Ascending aorta (tissue), 2 donors: ENCODE measurements at regions of chr18 and their contacts with region 1.

Region 1: GRCh38 chr18:22169007-22169864 is at the start of gene GATA6:
- DNase-seq: peak; percentile 88 to 97
- H3K4me3 ChIP-seq: peak within 1 kb of the TSS; percentile 89 to 90
- H3K27ac ChIP-seq: peak within 1 kb of the TSS; percentile 98 to 99
- H3K4me1 ChIP-seq: peaks cover 0 to 5% of the 10 kb centered on the region in 2 donors
- H3K27me3 ChIP-seq: no peaks in the 10 kb centered on the region
- CTCF ChIP-seq: peak; percentile 31 to 59 (median 44)
- total RNA-seq, gene GATA6: 89.3 TPM

Region 2: GRCh38 chr18:21111341-21112139 is 1057.7 kb before region 1 on chr18 and contains the start of gene ROCK1:
- intact Hi-C with region 1: loop called (anchors 10 kb)
- DNase-seq: peak; percentile 96 to 99
- H3K4me3 ChIP-seq: peak within 1 kb of the TSS; percentile 95 to 99
- H3K27ac ChIP-seq: peak within 1 kb of the TSS; percentile 98 to 99
- H3K4me1 ChIP-seq: peaks cover 16% of the 10 kb centered on the region in 2 donors
- H3K27me3 ChIP-seq: no peaks in the 10 kb centered on the region
- CTCF ChIP-seq: no peak
- total RNA-seq, gene ROCK1: 32.0 TPM

Region 3: GRCh38 chr18:21831413-21831831 is 337.8 kb before region 1 on chr18:
- intact Hi-C with region 1: loop called (anchors 5 kb)
- DNase-seq: peak; percentile 26 to 85
- H3K4me3 ChIP-seq: peak overlapping the region; percentile 18 to 55
- H3K27ac ChIP-seq: peak overlapping the region; percentile 67 to 77
- H3K4me1 ChIP-seq: peaks cover 0 to 20% of the 10 kb centered on the region in 2 donors
- H3K27me3 ChIP-seq: no peaks in the 10 kb centered on the region
- CTCF ChIP-seq: no peak

Region 4: DNA sequence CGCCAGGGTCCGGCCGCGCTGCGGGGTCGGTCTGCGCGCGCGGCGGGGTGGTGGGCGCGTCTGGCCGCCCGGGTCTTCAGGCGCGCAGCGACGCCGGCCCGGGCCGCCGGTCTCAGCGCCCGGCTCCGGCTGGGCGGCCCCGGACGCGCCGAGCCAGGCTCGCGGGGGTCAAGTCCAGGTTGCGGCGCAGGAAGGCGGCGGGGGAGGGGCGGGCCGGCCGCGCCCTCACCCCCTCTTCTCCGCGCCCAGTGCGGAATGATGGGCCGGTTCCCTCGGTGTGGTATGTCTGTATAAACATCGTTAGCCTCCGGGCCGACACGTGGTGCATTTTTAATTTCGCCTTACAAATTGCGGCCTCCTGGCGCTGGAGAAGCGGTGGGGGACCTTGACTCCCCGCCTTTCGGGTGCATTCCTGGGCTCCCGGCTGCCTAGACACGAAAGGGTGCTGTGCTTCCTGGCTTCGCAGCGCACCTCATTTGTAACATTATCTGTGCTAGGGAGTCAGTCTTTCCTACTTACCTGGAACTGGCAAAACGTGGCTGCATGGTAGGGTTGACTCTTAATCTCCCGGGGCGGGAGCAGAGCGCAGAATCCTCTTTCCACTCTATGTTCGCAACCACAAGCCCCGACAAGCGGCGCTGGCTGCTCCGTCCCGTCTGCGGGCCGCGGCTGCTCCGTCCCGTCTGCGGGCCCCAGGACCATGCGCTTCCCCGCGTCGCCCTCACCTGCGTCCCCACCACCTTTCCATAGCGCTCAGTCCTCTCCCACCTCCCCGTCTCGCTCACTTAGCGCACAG is 179.5 kb after region 1 on chr18:
- intact Hi-C with region 1: loop called (anchors 5 kb)
- DNase-seq: peak in 1 of 2 donors; percentile 83
- H3K4me3 ChIP-seq: peak overlapping the region; percentile 54 to 66
- H3K27ac ChIP-seq: peak overlapping the region; percentile 93 to 97
- H3K4me1 ChIP-seq: peaks cover 7 to 21% of the 10 kb centered on the region in 2 donors
- H3K27me3 ChIP-seq: no peaks in the 10 kb centered on the region
- CTCF ChIP-seq: no peak

Region 5: DNA sequence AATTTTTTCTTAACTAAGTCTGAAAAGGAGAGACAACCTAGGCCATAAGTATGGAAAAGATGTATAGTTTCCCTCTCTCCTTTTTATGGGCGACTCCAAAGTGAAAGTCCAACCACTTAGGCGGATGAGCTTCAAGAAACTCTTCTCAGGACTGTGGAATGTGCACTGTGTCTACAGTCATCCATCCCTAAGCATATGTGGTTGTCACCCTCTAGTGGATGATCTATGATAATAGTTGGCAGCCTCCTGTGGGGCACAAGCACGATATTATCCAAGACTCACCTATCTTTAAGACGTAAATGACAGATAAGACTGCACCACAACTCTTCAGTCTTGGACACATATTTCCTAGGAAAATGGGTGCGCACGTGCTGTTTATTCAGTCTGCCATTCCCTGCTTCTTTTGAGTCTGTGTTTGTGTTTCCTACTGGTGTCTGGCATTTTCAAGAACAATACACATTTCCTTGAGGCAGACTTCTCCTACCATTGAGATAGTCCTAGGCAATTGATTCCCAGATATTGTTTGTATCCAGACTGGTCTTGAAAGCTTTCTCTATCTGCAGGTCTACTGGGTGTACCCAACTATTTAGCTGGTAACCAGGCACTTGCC is 394.0 kb after region 1 on chr18:
- intact Hi-C with region 1: loop called (anchors 1 kb)
- DNase-seq: peak in 1 of 2 donors; percentile 74
- H3K4me3 ChIP-seq: peak overlapping the region; percentile 21 to 57
- H3K27ac ChIP-seq: peak overlapping the region; percentile 92 to 99
- H3K4me1 ChIP-seq: peaks cover 0 to 16% of the 10 kb centered on the region in 2 donors
- H3K27me3 ChIP-seq: no peaks in the 10 kb centered on the region
- CTCF ChIP-seq: peak; percentile 62 to 84 (median 79)

Region 6: DNA sequence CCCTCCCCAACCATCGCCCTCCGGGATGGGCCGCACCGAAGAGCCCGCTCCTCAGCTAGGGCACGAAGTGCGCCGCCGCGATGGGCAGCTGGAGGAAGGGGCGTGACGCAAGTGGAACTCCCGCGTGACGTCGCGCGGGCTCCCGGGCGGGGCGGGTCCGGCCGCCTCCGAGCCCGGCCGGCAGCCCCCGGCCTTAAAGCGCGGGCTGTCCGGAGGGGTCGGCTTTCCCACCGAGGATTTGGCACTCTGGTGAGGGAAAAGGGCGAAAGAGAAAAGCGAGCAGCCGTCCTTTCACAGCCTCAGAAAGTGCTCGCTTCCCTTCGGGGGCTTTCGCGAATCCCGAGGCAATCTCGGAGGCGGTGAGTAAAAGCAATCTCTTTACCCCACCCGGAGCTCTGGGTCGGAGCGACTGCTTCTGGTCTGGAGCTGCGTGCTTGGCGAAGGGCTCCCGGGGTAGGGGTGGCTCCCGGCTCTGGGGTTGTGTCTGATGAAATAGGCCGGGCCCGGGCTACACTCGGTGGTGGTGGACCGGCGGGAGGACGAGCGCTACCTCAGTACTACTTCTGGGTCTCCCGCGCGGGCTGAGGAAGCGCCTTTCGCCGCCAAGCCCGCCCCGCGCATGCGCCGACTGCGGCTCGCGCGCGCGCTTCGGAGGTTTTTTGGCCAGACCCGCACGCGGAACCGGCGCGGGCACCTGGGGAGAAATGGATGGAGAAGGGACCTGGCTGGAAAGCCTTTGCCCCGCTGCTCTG is 764.1 kb after region 1 on chr18 and contains the start of gene RBBP8:
- intact Hi-C with region 1: loop called (anchors 5 kb)
- DNase-seq: peak; percentile 33 to 88
- H3K4me3 ChIP-seq: peak within 1 kb of the TSS; percentile 80 to 86
- H3K27ac ChIP-seq: peak within 1 kb of the TSS; percentile 94 to 97
- H3K4me1 ChIP-seq: peaks cover 0 to 4% of the 10 kb centered on the region in 2 donors
- H3K27me3 ChIP-seq: no peaks in the 10 kb centered on the region
- CTCF ChIP-seq: no peak
- total RNA-seq, gene RBBP8: 1.9 TPM